ENCODE measurements at regions of chr3 and their contacts with region 1.

Region 1: DNA sequence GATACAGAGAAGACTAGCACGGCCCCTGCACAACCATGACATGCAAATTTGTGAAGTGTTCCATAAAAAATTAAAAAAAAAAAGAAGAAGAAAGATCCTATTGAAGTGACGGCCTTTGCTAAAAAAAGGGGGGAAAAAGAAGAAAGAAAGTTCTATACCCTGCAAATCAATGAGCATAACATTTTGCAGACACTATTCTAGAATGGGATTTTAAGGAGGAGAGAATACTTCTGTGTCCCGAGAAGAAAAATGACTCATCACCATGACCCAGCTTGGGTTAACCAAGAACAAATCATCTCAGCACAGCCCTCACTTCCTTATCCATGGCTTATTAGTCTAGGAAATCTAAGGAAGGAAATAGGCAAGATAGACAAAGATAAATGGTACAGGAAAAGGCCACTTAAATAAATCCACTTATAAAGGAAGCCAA is 7.4 kb upstream of the SH3BP5 start:
- DNase-seq: peak in 1 of 7 donors; percentile 48
- H3K4me3 ChIP-seq: no peak overlapping the region
- H3K27ac ChIP-seq: no peak overlapping the region
- H3K4me1 ChIP-seq: peaks cover 0 to 10% of the 10 kb centered on the region in 2 donors
- H3K27me3 ChIP-seq: no peaks in the 10 kb centered on the region
- CTCF ChIP-seq: no peak
- POLR2A ChIP-seq: no peak

Region 2: GRCh38 chr3:15291589-15292541 is 47.9 kb before region 1 on chr3:
- intact Hi-C with region 1: no loop called
- DNase-seq: peak in 1 of 7 donors; percentile 27
- H3K4me3 ChIP-seq: no peak overlapping the region
- H3K27ac ChIP-seq: peak overlapping the region; percentile 76 to 98 (median 92)
- H3K4me1 ChIP-seq: peaks cover 53 to 95% of the 10 kb centered on the region in 2 donors
- H3K27me3 ChIP-seq: no peaks in the 10 kb centered on the region
- CTCF ChIP-seq: no peak
- POLR2A ChIP-seq: no peak

Region 3: GRCh38 chr3:15377961-15378791 is 38.4 kb after region 1 on chr3:
- intact Hi-C with region 1: loop called in 1 of 2 experiments (anchors 5 kb)
- DNase-seq: peak; percentile 97 to 99 (median 99)
- H3K4me3 ChIP-seq: no peak overlapping the region
- H3K27ac ChIP-seq: peak overlapping the region; percentile 63 to 94 (median 80)
- H3K4me1 ChIP-seq: peaks cover 12 to 18% of the 10 kb centered on the region in 2 donors
- H3K27me3 ChIP-seq: no peaks in the 10 kb centered on the region
- CTCF ChIP-seq: peak; percentile 85 to 97 (median 93)
- POLR2A ChIP-seq: no peak